RWPE1 (cell line): ENCODE measurements at regions of chr15 and their contacts with region 1.

Region 1: GRCh38 chr15:90143166-90143655 is 40.9 kb upstream of the IDH2 start:
- DNase-seq: peak; percentile 72
- H3K27ac ChIP-seq: peak overlapping the region; percentile 12; the same call in 1 of the 2 replicates
- CTCF ChIP-seq: peak; percentile 92

Region 2: DNA sequence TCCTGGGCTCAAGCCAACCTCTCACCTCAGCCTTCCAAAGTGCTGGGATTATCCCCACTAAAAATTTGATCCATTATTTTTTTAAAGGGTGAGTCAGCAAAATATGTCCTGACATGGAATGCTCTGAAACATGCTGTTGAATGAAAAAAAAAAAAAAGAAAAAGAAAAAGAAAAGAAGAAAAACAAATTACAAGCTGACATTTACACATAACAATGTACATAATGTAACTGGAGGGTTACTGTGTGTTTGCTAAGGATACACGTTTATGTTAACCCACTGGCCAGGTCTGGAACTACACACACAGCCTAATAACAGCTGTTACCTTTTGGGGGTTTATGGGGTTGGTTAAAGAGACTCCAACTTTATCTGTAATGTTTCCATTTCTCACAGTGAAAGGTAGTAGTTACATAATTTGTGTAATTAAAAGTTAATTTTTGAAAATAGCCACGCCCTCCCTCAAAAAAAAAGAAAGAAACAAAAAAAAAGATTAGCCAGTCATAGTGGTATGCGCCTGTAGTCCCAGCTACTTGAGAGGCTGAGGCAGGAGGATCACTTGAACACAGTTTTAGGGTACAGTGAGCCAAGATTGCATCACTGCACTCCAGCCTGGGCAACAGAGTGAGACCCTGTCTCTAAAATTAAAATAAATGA is 370.2 kb before region 1 on chr15:
- CTCF ChIA-PET with region 1: no interaction called
- POLR2A ChIA-PET with region 1: no interaction called
- DNase-seq: no peak
- H3K27ac ChIP-seq: peak overlapping the region; percentile 13; the same call in 1 of the 2 replicates
- CTCF ChIP-seq: peak; percentile 50

Region 3: DNA sequence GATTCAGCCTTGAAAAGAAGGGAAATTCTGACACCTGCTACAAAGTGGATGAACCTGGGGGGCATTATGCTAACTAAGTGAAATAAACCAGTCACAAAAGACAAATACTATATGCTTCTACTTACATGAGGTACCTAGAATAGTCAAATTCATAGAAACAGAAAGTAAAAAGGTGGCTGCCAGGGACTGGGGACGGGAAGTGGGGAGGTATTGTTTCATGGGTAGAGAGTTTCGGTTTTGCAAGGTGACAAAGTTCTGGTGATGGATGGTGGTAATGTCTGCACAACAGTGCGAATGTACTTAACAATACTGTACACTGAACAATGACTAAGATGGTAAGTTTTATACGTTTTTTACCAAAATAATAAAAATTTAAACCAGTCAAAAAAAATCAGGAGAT is 45.7 kb before region 1 on chr15:
- CTCF ChIA-PET with region 1: no interaction called
- POLR2A ChIA-PET with region 1: no interaction called
- DNase-seq: no peak
- H3K27ac ChIP-seq: peak overlapping the region; percentile 57
- CTCF ChIP-seq: no peak

Region 4: GRCh38 chr15:90114451-90114901 is 28.7 kb before region 1 on chr15:
- CTCF ChIA-PET with region 1: no interaction called
- POLR2A ChIA-PET with region 1: interaction called, 11 read pairs
- DNase-seq: no peak
- H3K27ac ChIP-seq: no peak overlapping the region
- CTCF ChIP-seq: no peak

Region 5: DNA sequence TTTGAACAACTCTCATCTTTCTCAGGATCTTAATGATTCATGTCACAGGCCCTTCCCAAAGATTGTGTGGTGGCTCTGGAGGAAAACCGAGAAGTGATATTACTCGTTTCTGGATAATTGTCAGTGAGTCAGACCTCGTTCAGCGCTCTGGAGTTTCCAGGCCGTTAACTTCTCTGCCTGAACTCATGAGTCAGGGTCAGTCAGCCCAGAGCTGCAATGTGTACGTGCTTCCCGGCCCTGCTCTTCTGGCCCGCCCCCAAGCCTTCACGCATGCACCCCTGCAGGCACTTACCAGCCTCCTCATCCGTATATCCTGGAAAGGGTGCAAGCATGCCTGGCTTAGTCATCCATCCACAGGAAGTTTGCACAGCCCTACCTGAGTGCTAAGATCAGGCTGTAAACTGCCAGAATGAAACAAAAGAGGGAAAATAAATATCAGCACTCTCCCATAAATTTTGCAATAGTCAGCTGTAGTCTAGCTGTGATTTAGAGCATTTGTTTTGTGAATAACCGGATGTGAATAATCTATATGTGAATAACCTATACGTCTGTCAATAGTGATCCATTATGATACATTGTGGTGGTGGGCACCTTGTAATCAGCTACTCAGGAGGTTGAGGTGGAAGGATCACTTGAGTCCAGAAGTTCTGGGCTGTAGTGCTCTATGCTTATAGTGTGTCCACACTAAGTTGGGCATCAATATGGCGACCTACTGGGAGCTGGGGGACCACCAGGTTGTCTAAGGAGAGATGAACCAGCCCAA is 22.6 kb after region 1 on chr15:
- CTCF ChIA-PET with region 1: no interaction called
- POLR2A ChIA-PET with region 1: no interaction called
- DNase-seq: peak; percentile 96
- H3K27ac ChIP-seq: peak overlapping the region; percentile 94
- CTCF ChIP-seq: no peak

Region 6: GRCh38 chr15:90221246-90221900 is 78.2 kb after region 1 on chr15:
- CTCF ChIA-PET with region 1: interaction called, 10 read pairs
- POLR2A ChIA-PET with region 1: no interaction called
- DNase-seq: peak; percentile 48
- H3K27ac ChIP-seq: peak overlapping the region; percentile 73
- CTCF ChIP-seq: peak; percentile 72